ENCODE measurements at regions of chr6 and their contacts with region 1.

Region 1: GRCh38 chr6:18503593-18504231 is 116.6 kb downstream of the RNF144B start:
- DNase-seq: no peak
- H3K4me3 ChIP-seq: peak overlapping the region; percentile 3; the same call in 1 of the 2 replicates
- CTCF ChIP-seq: peak; percentile 89

Region 2: GRCh38 chr6:18122124-18123093 is 381.3 kb before region 1 on chr6 and contains the start of gene NHLRC1:
- CTCF ChIA-PET with region 1: interaction called, 13 read pairs
- POLR2A ChIA-PET with region 1: no interaction called
- DNase-seq: no peak
- H3K4me3 ChIP-seq: peak within 1 kb of the TSS; percentile 62
- CTCF ChIP-seq: peak; percentile 97

Region 3: DNA sequence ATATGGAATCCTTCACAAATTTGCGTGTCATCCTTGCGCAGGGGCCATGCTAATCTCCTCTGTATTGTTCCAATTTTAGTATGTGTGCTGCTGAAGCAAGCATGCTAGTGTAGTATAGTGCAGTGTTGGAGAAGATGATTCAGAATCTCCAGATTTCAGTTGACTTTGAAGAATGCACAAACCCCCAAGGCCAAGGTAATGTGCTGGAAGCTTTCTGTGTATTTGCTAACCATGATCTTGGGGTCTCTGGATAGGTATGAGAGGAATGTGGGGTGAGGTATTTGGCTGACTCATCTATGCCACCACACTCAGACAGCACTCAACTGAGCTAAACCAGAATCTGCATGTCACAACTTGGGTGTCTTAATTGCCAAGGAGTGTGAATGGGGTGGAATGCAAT is 196.7 kb before region 1 on chr6:
- CTCF ChIA-PET with region 1: interaction called, 18 read pairs
- POLR2A ChIA-PET with region 1: no interaction called
- DNase-seq: peak; percentile 91
- H3K4me3 ChIP-seq: no peak overlapping the region
- CTCF ChIP-seq: no peak

Region 4: GRCh38 chr6:18323935-18324705 is 179.6 kb before region 1 on chr6:
- CTCF ChIA-PET with region 1: interaction called, 490 read pairs
- POLR2A ChIA-PET with region 1: no interaction called
- DNase-seq: no peak
- H3K4me3 ChIP-seq: no peak overlapping the region
- CTCF ChIP-seq: peak; percentile 52

Region 5: GRCh38 chr6:18343741-18344140 is 160.0 kb before region 1 on chr6:
- CTCF ChIA-PET with region 1: interaction called, 16 read pairs
- POLR2A ChIA-PET with region 1: no interaction called
- DNase-seq: peak; percentile 44
- H3K4me3 ChIP-seq: no peak overlapping the region
- CTCF ChIP-seq: no peak

Region 6: DNA sequence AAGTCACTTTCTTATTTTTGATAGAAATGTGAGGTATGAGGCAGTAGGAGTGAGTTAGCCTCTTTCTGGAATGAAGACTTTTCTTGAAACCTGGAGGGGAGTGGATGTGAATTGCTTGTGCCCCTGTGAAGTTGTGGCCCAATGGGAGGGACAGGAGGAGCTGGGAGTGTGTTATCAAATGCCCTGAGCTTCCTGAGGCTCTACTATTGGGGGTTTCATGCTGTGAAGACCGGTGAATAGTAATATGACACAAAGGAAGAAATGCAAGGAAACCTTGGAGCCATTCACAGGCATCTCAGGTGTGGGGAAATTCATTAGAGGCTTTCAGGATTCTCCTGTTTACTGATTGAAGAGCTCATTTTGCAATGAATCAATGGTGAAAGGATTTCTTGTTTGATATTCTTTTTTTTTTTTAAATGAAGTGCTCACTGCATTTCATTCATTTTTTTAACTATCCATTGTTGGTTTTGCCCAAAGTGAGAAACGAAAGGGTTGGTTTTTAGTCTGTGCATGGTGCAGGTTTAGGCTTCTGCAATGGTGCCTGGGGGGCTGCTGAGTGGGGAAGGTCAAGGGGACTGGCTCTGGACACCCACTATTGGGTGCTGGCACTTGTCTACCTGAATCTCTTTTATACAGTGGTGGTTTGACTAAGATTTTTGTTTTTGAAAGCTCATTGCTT is 108.4 kb before region 1 on chr6:
- CTCF ChIA-PET with region 1: interaction called, 10 read pairs
- POLR2A ChIA-PET with region 1: no interaction called
- DNase-seq: no peak
- H3K4me3 ChIP-seq: no peak overlapping the region
- CTCF ChIP-seq: no peak

Region 7: DNA sequence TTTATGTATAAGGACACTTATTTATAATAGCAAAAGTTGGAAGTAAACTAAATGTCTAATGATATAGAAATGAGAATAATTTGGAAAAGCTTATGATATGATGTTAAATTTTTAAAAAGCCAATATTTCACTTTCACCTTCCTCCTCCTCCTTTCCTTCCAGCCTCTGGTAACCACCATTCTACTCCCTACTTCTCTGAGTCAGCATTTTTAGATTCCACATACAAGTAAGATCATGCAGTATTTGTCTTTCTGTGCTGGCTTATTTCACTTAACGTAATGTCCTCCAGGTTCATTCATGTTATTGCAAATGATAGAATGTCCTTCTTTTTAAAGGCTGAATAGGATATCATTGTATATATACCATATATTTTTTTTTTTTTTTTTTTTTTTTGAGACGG is 63.7 kb after region 1 on chr6:
- CTCF ChIA-PET with region 1: no interaction called
- POLR2A ChIA-PET with region 1: no interaction called
- DNase-seq: no peak
- H3K4me3 ChIP-seq: no peak overlapping the region
- CTCF ChIP-seq: no peak

Region 8: DNA sequence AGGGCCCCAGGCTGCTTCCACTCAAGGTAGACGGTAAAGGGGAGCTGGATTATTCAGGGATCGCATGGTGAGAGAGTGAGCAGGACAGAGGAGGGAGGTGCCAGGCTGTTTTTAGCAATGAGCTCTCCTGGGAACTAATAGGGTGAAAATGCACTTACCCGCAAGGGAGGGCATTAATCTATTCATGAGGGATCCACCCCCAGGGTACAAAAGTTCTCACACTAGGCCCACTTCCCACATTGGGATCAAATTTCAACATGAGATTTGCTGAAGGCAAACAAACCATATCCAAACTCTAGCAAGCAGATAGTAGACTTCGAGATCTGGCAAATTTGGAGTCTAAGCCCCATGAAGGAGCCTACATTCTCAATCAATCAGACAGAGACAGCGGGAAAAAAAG is 292.0 kb after region 1 on chr6:
- CTCF ChIA-PET with region 1: no interaction called
- POLR2A ChIA-PET with region 1: no interaction called
- DNase-seq: no peak
- H3K4me3 ChIP-seq: no peak overlapping the region
- CTCF ChIP-seq: no peak